Transverse colon (tissue), 4 donors: ENCODE measurements at regions of chr13 and their contacts with region 1.

Region 1: DNA sequence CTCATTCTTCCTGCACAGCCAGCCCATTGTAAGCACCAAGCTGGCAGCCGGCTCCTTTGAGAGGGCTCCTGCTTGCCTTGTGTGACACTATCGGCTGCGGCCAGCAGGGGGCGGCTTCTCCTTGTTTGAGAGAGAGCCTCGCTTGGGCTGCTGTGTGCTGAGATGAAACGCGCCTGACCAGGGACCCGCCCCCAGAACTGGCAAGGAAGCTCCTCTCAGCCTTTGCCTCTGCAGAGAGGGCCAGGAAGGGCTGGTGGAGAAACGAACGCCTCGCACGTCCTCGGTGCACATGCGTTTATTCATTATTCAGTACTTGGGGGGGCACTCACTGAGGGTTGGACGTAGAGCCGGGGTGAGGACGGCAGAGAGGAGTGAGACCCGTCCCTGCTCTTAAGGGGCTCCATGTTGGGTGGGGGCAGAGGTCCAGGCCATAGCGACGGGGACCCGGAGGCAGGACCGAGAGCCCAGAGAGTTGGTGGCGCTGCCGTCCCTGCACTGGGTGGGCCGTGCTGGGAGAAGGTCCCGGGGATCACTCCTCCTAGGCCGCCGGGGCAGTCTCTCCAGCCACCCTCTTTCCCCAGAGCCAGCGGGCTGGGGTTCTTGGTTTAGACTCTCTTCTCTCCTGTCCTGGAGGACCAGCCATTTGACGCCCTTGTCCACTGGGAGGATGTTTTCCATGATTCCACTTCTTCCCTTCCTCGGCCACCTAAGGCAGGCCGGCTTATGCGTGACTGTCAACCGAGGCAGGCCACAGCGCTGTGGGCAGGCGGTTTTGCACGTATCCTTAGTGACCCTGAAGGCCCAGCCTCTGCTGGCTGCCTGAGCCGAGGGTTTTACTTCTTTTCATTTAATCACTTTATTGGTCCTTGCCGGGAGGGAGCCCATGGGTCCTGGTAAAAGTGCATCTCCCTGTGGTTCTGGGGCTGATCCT is 174.5 kb downstream of the KATNAL1 start:
- DNase-seq: peak; percentile 99
- H3K4me3 ChIP-seq: peak overlapping the region in 1 of 4 donors; percentile 1
- H3K27ac ChIP-seq: peak overlapping the region; percentile 19 to 76 (median 46)
- H3K4me1 ChIP-seq: peaks cover 7 to 16% (median 13%) of the 10 kb centered on the region in 4 donors
- H3K27me3 ChIP-seq: no peaks in the 10 kb centered on the region
- CTCF ChIP-seq: peak; percentile 88 to 96 (median 94)
- EP300 ChIP-seq: no peak
- POLR2A ChIP-seq: no peak

Region 2: DNA sequence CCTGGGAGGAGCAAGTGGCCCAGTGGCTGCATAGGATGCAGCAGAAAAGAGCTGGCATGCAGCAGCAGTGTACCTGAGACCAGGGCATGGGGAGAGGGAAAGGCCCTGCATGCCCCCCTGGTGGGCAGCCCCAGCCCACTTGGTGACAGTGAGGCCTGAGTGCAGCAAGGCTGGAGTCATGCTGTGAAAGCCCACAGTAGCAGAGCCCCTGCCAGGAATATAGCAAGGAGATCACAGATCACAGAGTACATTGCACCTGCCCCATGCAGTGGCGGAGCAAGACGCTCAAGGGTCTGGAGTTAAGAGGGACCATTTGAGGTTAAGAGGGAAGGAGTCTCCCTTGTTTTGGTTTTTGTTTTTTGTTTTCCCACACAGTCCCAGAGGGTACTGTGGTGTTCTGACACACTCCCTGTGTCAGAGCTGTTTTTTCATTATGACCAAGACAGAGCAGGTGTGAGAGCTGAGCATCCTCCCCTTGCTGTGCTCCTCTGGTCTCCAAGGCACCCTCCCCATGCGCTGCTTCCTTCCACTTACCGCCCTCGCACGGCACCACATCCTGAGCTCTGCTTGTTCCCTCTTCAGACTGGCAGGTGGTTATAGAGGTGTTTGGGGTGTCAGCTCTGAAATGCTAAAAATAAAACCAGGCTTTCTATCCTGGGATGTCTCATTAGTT is 197.4 kb before region 1 on chr13:
- in situ Hi-C with region 1: no loop called
- intact Hi-C with region 1: no loop called
- DNase-seq: peak; percentile 51
- H3K4me3 ChIP-seq: peak overlapping the region in 1 of 4 donors; percentile 12
- H3K27ac ChIP-seq: peak overlapping the region in 1 of 4 donors; percentile 41
- H3K4me1 ChIP-seq: peaks cover 0 to 7% (median 0%) of the 10 kb centered on the region in 4 donors
- H3K27me3 ChIP-seq: no peaks in the 10 kb centered on the region
- CTCF ChIP-seq: no peak
- EP300 ChIP-seq: no peak
- POLR2A ChIP-seq: no peak

Region 3: GRCh38 chr13:30334663-30335386 is 201.9 kb after region 1 on chr13:
- in situ Hi-C with region 1: loop called in 1 of 4 experiments (anchors 25 kb)
- intact Hi-C with region 1: no loop called
- DNase-seq: no peak
- H3K4me3 ChIP-seq: no peak overlapping the region
- H3K27ac ChIP-seq: no peak overlapping the region
- H3K4me1 ChIP-seq: peaks cover 3 to 29% (median 16%) of the 10 kb centered on the region in 4 donors
- H3K27me3 ChIP-seq: no peaks in the 10 kb centered on the region
- CTCF ChIP-seq: peak in 4 of 5 experiments; percentile 34 to 48 (median 39)
- EP300 ChIP-seq: no peak
- POLR2A ChIP-seq: no peak

Region 4: DNA sequence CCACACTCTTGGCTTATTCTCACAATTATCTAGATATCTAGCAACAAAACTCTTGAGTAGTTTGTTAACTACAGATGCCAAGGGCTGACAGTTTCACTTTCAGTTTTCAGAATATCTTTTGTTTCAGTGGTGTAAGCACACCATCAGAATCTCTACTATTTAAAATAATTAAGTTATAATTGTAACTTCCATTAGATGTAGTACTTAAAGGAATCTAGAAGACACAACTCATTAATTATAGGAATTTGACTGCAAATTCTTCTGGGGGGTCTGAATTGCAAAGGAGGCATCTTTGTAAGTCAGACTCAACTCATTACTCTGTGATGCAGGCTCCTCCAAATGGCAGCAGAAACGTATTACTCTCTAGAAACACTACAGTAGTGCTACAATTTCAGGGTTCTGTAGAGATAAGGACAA is 440.0 kb after region 1 on chr13:
- in situ Hi-C with region 1: loop called in 2 of 4 experiments (anchors 25 kb)
- intact Hi-C with region 1: no loop called
- DNase-seq: no peak
- H3K4me3 ChIP-seq: peak overlapping the region in 3 of 4 donors; percentile 19 to 36 (median 19)
- H3K27ac ChIP-seq: peak overlapping the region; percentile 4 to 73 (median 40)
- H3K4me1 ChIP-seq: peaks cover 0 to 20% (median 7%) of the 10 kb centered on the region in 4 donors
- H3K27me3 ChIP-seq: no peaks in the 10 kb centered on the region
- CTCF ChIP-seq: peak in 2 of 5 experiments; percentile 17 to 19
- EP300 ChIP-seq: no peak
- POLR2A ChIP-seq: no peak

Region 5: DNA sequence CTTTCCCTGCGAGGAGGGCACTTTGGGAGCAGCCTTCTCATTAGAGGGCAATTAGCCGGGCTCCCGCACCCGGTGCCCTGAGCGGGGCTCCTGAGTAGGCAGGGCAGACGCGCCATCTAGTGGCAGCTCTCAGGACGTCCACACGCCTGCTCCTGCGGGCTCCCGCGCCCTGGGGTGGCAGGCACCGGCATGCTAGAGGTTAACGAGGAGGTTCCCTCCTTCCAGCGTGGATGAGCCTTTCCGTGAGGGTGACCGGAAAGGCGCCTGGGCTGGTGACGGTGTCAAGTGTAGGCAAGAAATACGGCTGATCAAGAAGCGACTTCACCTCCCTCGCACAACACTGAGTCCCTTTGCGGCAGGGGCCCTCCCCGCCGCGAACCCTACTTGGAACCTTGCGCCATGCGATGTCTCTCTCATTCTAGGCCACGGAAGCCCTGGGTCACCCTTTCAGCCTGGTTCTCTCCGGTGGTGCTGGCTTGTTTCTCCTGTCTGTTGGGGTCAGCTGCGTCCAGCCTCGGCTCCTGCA is 670.1 kb after region 1 on chr13:
- in situ Hi-C with region 1: loop called in 3 of 4 experiments (anchors 25 kb)
- intact Hi-C with region 1: no loop called
- DNase-seq: peak; percentile 88
- H3K4me3 ChIP-seq: peak overlapping the region in 3 of 4 donors; percentile 26 to 43 (median 31)
- H3K27ac ChIP-seq: peak overlapping the region in 3 of 4 donors; percentile 29 to 68 (median 49)
- H3K4me1 ChIP-seq: peaks cover 0 to 20% (median 13%) of the 10 kb centered on the region in 4 donors
- H3K27me3 ChIP-seq: no peaks in the 10 kb centered on the region
- CTCF ChIP-seq: peak; percentile 90 to 97 (median 93)
- EP300 ChIP-seq: no peak
- POLR2A ChIP-seq: no peak

Region 6: GRCh38 chr13:30957258-30957943 is 824.5 kb after region 1 on chr13:
- in situ Hi-C with region 1: no loop called
- intact Hi-C with region 1: no loop called
- DNase-seq: no peak
- H3K4me3 ChIP-seq: no peak overlapping the region
- H3K27ac ChIP-seq: no peak overlapping the region
- H3K4me1 ChIP-seq: no peaks in the 10 kb centered on the region
- H3K27me3 ChIP-seq: no peaks in the 10 kb centered on the region
- CTCF ChIP-seq: no peak
- EP300 ChIP-seq: no peak
- POLR2A ChIP-seq: no peak